ENCODE measurements at regions of chr6 and their contacts with region 1.

Region 1: GRCh38 chr6:33579828-33580714 is at the start of gene BAK1:
- DNase-seq: peak; percentile 85 to 96 (median 95)
- H3K4me3 ChIP-seq: peak within 1 kb of the TSS; percentile 26 to 91 (median 86)
- H3K27ac ChIP-seq: peak within 1 kb of the TSS; percentile 82 to 95 (median 94)
- H3K4me1 ChIP-seq: peaks cover 33 to 37% of the 10 kb centered on the region in 2 donors
- H3K27me3 ChIP-seq: no peaks in the 10 kb centered on the region
- CTCF ChIP-seq: peak; percentile 31 to 55 (median 46)
- POLR2A ChIP-seq: peak; percentile 59 to 93
- total RNA-seq, gene BAK1: 9.7 to 51.9 (median 24.5) TPM

Region 2: GRCh38 chr6:33425668-33426577 is 154.1 kb before region 1 on chr6:
- intact Hi-C with region 1: loop called in 1 of 2 experiments (anchors 10 kb)
- DNase-seq: peak; percentile 86 to 94 (median 90)
- H3K4me3 ChIP-seq: peak overlapping the region; percentile 37 to 73 (median 42)
- H3K27ac ChIP-seq: peak overlapping the region; percentile 79 to 96 (median 88)
- H3K4me1 ChIP-seq: peaks cover 19 to 49% of the 10 kb centered on the region in 2 donors
- H3K27me3 ChIP-seq: no peaks in the 10 kb centered on the region
- CTCF ChIP-seq: peak; percentile 26 to 60 (median 53)
- POLR2A ChIP-seq: peak in 1 of 2 donors; percentile 61

Region 3: GRCh38 chr6:33633462-33634158 is 53.5 kb after region 1 on chr6:
- intact Hi-C with region 1: loop called in 1 of 2 experiments (anchors 10 kb)
- DNase-seq: peak; percentile 66 to 80 (median 71)
- H3K4me3 ChIP-seq: peak overlapping the region in 2 of 4 donors; percentile 8 to 63
- H3K27ac ChIP-seq: peak overlapping the region in 2 of 5 donors; percentile 7 to 72
- H3K4me1 ChIP-seq: peaks cover 12 to 14% of the 10 kb centered on the region in 2 donors
- H3K27me3 ChIP-seq: no peaks in the 10 kb centered on the region
- CTCF ChIP-seq: no peak
- POLR2A ChIP-seq: no peak

Region 4: GRCh38 chr6:33672808-33673207 is 92.7 kb after region 1 on chr6:
- intact Hi-C with region 1: loop called in 1 of 2 experiments (anchors 10 kb)
- DNase-seq: peak; percentile 83 to 97 (median 95)
- H3K4me3 ChIP-seq: no peak overlapping the region
- H3K27ac ChIP-seq: no peak overlapping the region
- H3K4me1 ChIP-seq: peaks cover 0 to 3% of the 10 kb centered on the region in 2 donors
- H3K27me3 ChIP-seq: no peaks in the 10 kb centered on the region
- CTCF ChIP-seq: peak; percentile 18 to 77 (median 68)
- POLR2A ChIP-seq: no peak

Region 5: DNA sequence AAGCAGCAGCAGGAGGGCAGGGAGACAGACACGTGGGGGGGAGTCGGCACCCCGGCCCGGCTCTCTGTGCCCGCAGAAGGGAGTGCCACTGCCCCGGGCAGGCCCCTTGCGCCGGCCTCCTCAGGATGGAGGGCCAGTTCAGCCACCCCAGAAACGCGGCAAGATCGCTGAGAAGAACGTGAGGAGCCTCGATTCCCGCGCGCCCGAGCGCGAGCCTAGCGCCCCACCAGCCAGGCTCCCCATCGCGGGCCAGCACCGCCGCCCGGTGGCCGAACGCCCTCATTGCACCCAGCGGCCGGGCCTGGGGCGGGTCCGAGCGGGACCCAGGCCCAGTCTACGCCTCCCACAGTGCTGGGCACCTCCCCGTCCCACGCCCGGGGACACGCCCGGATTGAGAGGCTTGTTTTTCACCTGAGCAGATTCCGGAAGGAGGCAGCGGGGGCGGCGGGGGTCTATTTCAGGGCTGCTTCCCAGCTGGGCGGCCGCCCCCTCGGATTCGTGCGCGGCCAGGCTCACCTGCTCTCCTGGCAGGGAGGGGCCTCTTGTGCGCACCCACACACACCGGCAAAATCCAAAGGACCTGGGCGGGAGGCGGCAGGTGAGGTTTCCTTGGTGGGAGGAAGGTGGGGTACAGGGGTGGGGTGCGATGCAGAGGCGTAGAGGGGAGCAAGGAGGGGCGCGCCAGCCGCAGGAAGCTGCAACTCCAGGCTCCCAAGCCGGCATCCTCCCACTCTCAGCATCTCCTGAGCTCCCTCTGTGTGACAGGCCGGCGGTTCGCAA is 574.8 kb after region 1 on chr6:
- intact Hi-C with region 1: loop called in 1 of 2 experiments (anchors 10 kb)
- DNase-seq: peak in 6 of 7 donors; percentile 35 to 58 (median 48)
- H3K4me3 ChIP-seq: peak overlapping the region in 1 of 4 donors; percentile 4
- H3K27ac ChIP-seq: no peak overlapping the region
- H3K4me1 ChIP-seq: peaks cover 0 to 5% of the 10 kb centered on the region in 2 donors
- H3K27me3 ChIP-seq: peaks cover 33% of the 10 kb centered on the region
- CTCF ChIP-seq: peak; percentile 80 to 98 (median 90)
- POLR2A ChIP-seq: no peak